PC-9 (cell line): ENCODE measurements at regions of chr4 and their contacts with region 1.

Region 1: GRCh38 chr4:150217192-150217591 is 138.9 kb downstream of the DCLK2 start:
- DNase-seq: no peak
- H3K4me3 ChIP-seq: no peak overlapping the region
- H3K27ac ChIP-seq: no peak overlapping the region
- H3K4me1 ChIP-seq: peaks cover 54% of the 10 kb centered on the region
- H3K27me3 ChIP-seq: no peaks in the 10 kb centered on the region
- CTCF ChIP-seq: no peak

Region 2: GRCh38 chr4:150078637-150079581 is 138.3 kb before region 1 on chr4:
- CTCF ChIA-PET with region 1: no interaction called
- POLR2A ChIA-PET with region 1: no interaction called
- intact Hi-C with region 1: loop called (anchors 10 kb)
- DNase-seq: peak in 1 of 2 experiments; percentile 44
- H3K4me3 ChIP-seq: peak overlapping the region; percentile 57
- H3K27ac ChIP-seq: no peak overlapping the region
- H3K4me1 ChIP-seq: no peaks in the 10 kb centered on the region
- H3K27me3 ChIP-seq: 0 out of 2 replicates have a peak, but pooled peaks cover 10% of the 10 kb centered on the region
- CTCF ChIP-seq: no peak

Region 3: DNA sequence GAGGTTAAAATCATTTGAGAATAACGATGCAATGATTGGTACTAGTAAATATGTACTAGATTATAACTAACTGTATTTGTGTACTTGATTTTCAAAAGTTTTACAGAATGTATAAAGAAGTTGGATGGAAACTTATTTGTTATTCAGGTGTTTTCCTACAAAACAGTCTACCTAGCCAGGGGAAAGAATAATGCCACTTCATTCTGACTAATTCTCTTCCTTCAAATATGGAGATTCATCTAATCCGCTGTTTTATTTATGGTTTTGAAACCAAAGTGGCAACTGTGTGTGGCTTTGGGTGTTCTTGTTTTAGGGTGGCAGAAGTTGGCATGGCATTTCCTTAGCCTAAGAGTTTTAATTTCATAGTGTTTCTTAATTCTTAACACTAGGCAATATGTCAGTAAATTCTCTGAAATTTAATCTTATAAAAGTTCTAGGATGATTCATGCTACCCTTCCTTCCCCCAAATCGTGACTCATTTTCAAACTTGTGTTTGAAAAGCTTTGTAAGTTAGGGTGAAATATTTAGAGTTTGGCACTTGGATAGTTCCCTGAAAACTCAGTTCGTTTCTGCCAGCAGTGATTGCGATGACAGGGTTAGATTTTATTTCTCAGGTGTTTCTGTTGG is 76.3 kb before region 1 on chr4:
- CTCF ChIA-PET with region 1: no interaction called
- POLR2A ChIA-PET with region 1: no interaction called
- intact Hi-C with region 1: no loop called
- DNase-seq: peak in 1 of 2 experiments; percentile 63
- H3K4me3 ChIP-seq: no peak overlapping the region
- H3K27ac ChIP-seq: peak overlapping the region; percentile 49
- H3K4me1 ChIP-seq: peaks cover 14% of the 10 kb centered on the region
- H3K27me3 ChIP-seq: no peaks in the 10 kb centered on the region
- CTCF ChIP-seq: no peak

Region 4: GRCh38 chr4:150235808-150236271 is 18.6 kb after region 1 on chr4:
- CTCF ChIA-PET with region 1: no interaction called
- POLR2A ChIA-PET with region 1: no interaction called
- intact Hi-C with region 1: loop called (anchors 2 kb)
- DNase-seq: no peak
- H3K4me3 ChIP-seq: no peak overlapping the region
- H3K27ac ChIP-seq: no peak overlapping the region
- H3K4me1 ChIP-seq: peaks cover 14% of the 10 kb centered on the region
- H3K27me3 ChIP-seq: no peaks in the 10 kb centered on the region
- CTCF ChIP-seq: no peak